ENCODE measurements at regions of chr5 and their contacts with region 1.

Region 1: GRCh38 chr5:56270568-56271392 is 37.6 kb upstream of the ANKRD55 start:
- DNase-seq: peak; percentile 81
- H3K4me3 ChIP-seq: no peak overlapping the region
- H3K27ac ChIP-seq: no peak overlapping the region
- H3K4me1 ChIP-seq: peaks cover 0 to 3% (median 0%) of the 10 kb centered on the region in 4 donors
- H3K27me3 ChIP-seq: no peaks in the 10 kb centered on the region
- CTCF ChIP-seq: peak; percentile 94 to 97 (median 95)
- EP300 ChIP-seq: no peak
- POLR2A ChIP-seq: no peak

Region 2: GRCh38 chr5:56247592-56247991 is 23.2 kb before region 1 on chr5:
- in situ Hi-C with region 1: no loop called
- intact Hi-C with region 1: no loop called
- DNase-seq: no peak
- H3K4me3 ChIP-seq: no peak overlapping the region
- H3K27ac ChIP-seq: no peak overlapping the region
- H3K4me1 ChIP-seq: no peaks in the 10 kb centered on the region
- H3K27me3 ChIP-seq: no peaks in the 10 kb centered on the region
- CTCF ChIP-seq: no peak
- EP300 ChIP-seq: no peak
- POLR2A ChIP-seq: no peak

Region 3: GRCh38 chr5:56575821-56576220 is 305.0 kb after region 1 on chr5:
- in situ Hi-C with region 1: no loop called
- intact Hi-C with region 1: no loop called
- DNase-seq: no peak
- H3K4me3 ChIP-seq: no peak overlapping the region
- H3K27ac ChIP-seq: no peak overlapping the region
- H3K4me1 ChIP-seq: no peaks in the 10 kb centered on the region
- H3K27me3 ChIP-seq: no peaks in the 10 kb centered on the region
- CTCF ChIP-seq: no peak
- EP300 ChIP-seq: no peak
- POLR2A ChIP-seq: no peak

Region 4: DNA sequence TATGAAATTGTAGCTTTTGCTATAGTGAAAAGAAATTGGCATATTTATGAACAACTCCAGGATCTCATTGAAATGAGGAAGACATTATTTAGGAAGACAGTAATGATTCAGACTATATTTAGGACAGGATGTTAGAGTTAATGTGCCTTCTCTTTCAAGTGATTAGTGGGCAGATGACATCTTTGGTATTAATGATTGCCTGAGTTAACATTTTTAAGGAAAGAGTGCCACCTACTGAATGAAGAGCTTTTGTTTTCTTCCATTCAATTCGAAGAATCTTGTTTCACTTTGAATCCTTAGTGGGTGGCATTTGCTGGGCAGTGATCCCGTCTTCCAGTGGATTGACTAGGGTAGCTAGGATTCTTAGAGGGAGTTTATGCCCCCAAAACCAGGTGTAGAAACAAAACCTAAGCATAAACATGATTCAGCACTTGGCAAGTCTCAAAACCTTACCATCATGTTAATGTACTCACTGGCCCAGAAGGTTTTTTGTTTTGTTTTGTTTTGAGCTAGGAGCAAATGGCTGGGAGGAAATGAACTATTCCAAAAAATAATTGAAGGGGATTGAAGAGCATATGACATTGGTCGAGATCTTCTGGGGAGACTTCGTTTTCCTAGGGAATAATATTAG is 567.7 kb after region 1 on chr5:
- in situ Hi-C with region 1: loop called (anchors 5 to 10 kb)
- intact Hi-C with region 1: loop called (anchors 1 kb)
- DNase-seq: no peak
- H3K4me3 ChIP-seq: no peak overlapping the region
- H3K27ac ChIP-seq: peak overlapping the region; percentile 26 to 60 (median 44)
- H3K4me1 ChIP-seq: peaks cover 0 to 36% (median 5%) of the 10 kb centered on the region in 4 donors
- H3K27me3 ChIP-seq: no peaks in the 10 kb centered on the region
- CTCF ChIP-seq: peak; percentile 40 to 56 (median 47)
- EP300 ChIP-seq: no peak
- POLR2A ChIP-seq: no peak

Region 5: DNA sequence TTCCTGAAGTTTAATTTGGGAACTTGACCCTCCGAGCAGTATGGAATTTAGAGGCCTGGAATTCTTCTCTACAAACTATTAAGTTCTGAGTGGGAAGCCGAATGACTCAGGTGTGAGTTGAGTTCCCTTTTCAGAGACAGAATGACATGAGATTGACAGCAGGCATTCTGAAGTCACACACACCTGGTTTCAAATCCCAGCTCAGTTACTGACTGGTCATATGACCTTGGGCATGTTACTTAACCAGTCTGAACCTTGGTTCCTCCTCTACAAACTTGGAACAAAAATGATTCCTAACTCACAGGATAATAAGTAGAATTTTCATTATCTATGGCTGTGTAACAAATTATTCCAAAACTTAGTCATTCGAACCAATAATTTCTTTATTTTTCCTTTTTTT is 857.5 kb after region 1 on chr5:
- in situ Hi-C with region 1: loop called in 3 of 4 experiments (anchors 25 kb)
- intact Hi-C with region 1: no loop called
- DNase-seq: no peak
- H3K4me3 ChIP-seq: no peak overlapping the region
- H3K27ac ChIP-seq: no peak overlapping the region
- H3K4me1 ChIP-seq: no peaks in the 10 kb centered on the region
- H3K27me3 ChIP-seq: no peaks in the 10 kb centered on the region
- CTCF ChIP-seq: no peak
- EP300 ChIP-seq: no peak
- POLR2A ChIP-seq: no peak

Measured in transverse colon (tissue), 4 donors.